ENCODE measurements at regions of chr19 and their contacts with region 1.

Region 1: GRCh38 chr19:49106648-49107135 is 7.5 kb upstream of the LIN7B start:
- DNase-seq: peak in 1 of 4 donors; percentile 84
- ATAC-seq: peak; percentile 59
- H3K4me3 ChIP-seq: no peak overlapping the region
- H3K27ac ChIP-seq: no peak overlapping the region
- H3K4me1 ChIP-seq: no peaks in the 10 kb centered on the region
- H3K27me3 ChIP-seq: no peaks in the 10 kb centered on the region
- CTCF ChIP-seq: peak; percentile 55 to 76

Region 2: GRCh38 chr19:49200238-49200862 is 93.7 kb after region 1 on chr19:
- intact Hi-C with region 1: loop called in 1 of 2 experiments (anchors 10 kb)
- DNase-seq: no peak
- ATAC-seq: no peak
- H3K4me3 ChIP-seq: no peak overlapping the region
- H3K27ac ChIP-seq: no peak overlapping the region
- H3K4me1 ChIP-seq: peaks cover 0 to 18% of the 10 kb centered on the region in 2 donors
- H3K27me3 ChIP-seq: no peaks in the 10 kb centered on the region
- CTCF ChIP-seq: no peak

Region 3: GRCh38 chr19:49528211-49528771 is 421.6 kb after region 1 on chr19:
- intact Hi-C with region 1: no loop called
- DNase-seq: peak in 1 of 4 donors; percentile 39
- ATAC-seq: no peak
- H3K4me3 ChIP-seq: peak overlapping the region; percentile 31 to 38
- H3K27ac ChIP-seq: peak overlapping the region; percentile 40 to 48
- H3K4me1 ChIP-seq: peaks cover 7 to 27% of the 10 kb centered on the region in 2 donors
- H3K27me3 ChIP-seq: no peaks in the 10 kb centered on the region
- CTCF ChIP-seq: no peak

Measured in left lung (tissue), 14 donors.